Psoas muscle (tissue), 8 donors: ENCODE measurements at regions of chr1 and their contacts with region 1.

Region 1: DNA sequence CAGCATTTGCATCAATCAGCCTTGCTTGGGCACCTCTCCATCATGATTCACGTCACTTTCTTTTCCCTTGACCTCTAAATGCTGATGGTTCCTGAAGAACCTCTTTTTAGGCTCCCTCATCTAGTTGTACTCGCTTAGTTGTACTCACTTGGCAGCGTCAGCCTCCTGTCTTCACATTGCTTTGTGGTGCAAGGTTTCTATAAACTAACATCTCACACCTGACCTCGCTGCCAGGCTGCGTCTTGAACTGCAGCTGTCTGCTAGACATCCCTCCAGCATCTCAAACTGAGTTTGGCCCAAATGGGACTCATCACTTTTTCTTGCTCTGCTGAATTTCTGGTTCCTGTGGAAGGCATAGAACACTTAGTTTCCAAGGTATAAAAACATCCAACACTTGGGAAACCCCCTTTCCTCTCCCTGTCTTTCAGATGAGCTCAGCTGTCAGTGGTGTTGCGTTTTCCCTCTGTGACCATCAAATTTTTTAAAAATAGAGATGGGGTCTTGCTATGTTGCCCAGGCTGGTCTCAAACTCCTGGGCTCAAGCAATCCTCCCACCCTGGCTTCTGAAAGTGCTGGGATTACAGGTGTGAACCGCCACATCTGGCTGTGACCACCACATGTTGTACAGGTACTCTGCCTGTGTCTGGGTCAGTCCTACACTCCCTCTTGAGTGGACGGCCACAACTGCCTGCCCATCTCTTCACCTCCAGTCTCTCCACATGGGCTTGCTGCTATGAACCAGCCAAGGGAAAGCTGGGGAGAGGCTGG is 66.9 kb downstream of the SYT6 start:
- DNase-seq: no peak
- ATAC-seq: peak in 2 of 4 donors; percentile 49 to 67
- H3K4me3 ChIP-seq: no peak overlapping the region
- H3K27ac ChIP-seq: no peak overlapping the region
- H3K4me1 ChIP-seq: peaks cover 11% of the 10 kb centered on the region
- H3K27me3 ChIP-seq: peaks cover 0 to 2% (median 0%) of the 10 kb centered on the region in 3 donors
- CTCF ChIP-seq: no peak

Region 2: DNA sequence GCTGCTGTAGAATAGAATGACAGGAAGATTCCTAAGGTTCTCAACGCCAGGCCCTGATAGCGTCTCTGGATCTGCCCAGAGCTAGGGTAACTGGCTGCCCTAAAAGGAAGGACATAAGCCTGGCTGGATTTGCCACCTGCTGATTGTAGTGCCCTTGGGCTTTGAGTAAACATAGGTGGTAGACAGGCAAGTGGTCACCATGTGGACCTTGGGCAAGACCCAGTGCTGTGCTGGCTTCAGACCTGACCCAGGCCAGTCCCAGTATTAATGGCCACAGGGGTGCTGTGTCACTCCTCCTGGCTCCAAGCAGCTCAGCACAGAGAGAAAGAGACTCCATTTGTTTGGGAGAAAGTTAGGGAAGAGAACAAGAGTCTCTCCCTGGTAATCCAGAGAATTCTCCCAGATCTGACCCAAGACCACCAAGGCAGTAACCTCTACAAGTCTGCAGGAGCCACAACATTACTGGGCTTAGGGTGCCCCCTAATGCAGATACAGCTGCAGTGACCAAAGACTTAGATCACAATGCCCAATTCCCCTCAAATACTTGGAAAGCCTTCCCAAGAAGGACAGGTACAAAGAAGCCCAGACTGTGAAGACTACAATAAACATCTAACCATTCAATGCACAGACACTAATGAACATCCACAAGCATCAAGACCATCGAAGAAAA is 372.0 kb before region 1 on chr1:
- intact Hi-C with region 1: no loop called
- DNase-seq: no peak
- ATAC-seq: no peak
- H3K4me3 ChIP-seq: no peak overlapping the region
- H3K27ac ChIP-seq: no peak overlapping the region
- H3K4me1 ChIP-seq: no peaks in the 10 kb centered on the region
- H3K27me3 ChIP-seq: no peaks in the 10 kb centered on the region
- CTCF ChIP-seq: no peak

Region 3: GRCh38 chr1:113734357-113735055 is 352.3 kb before region 1 on chr1:
- intact Hi-C with region 1: no loop called
- DNase-seq: no peak
- ATAC-seq: no peak
- H3K4me3 ChIP-seq: no peak overlapping the region
- H3K27ac ChIP-seq: no peak overlapping the region
- H3K4me1 ChIP-seq: no peaks in the 10 kb centered on the region
- H3K27me3 ChIP-seq: no peaks in the 10 kb centered on the region
- CTCF ChIP-seq: no peak

Region 4: DNA sequence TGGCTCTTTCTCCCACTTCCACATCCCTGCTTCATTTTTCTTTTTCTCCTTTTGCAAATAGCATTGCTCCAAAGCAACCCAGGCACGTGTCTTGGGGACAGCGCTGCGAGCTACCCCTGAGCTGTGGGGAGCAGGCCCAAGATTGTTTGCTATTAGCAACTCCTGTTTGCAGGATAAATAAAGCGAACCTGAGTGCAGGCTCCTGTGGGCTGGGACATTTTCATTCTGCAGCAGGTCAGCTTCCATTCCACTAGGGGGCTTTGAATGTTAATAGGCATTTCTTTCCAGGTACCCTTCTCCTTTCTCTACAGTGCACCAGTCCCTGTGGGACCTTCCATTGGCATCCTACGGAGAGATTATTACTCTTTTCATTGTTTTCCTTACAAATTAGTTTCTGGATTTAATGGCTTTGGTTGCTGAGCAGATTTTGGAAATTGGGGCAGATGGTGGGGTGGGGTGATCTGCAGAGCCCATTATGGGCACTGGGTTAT is 53.5 kb before region 1 on chr1:
- intact Hi-C with region 1: no loop called
- DNase-seq: no peak
- ATAC-seq: peak; percentile 34 to 64 (median 62)
- H3K4me3 ChIP-seq: no peak overlapping the region
- H3K27ac ChIP-seq: peak overlapping the region; percentile 76
- H3K4me1 ChIP-seq: peaks cover 16% of the 10 kb centered on the region
- H3K27me3 ChIP-seq: no peaks in the 10 kb centered on the region
- CTCF ChIP-seq: peak; percentile 41

Region 5: GRCh38 chr1:114108751-114109255 is 22.0 kb after region 1 on chr1:
- intact Hi-C with region 1: loop called in 1 of 2 experiments (anchors 1 kb)
- DNase-seq: no peak
- ATAC-seq: no peak
- H3K4me3 ChIP-seq: no peak overlapping the region
- H3K27ac ChIP-seq: no peak overlapping the region
- H3K4me1 ChIP-seq: peaks cover 5% of the 10 kb centered on the region
- H3K27me3 ChIP-seq: no peaks in the 10 kb centered on the region
- CTCF ChIP-seq: no peak